Activated CD4-positive, alpha-beta T cell treated with anti-CD3 and anti-CD28 coated beads for 36 hours (primary cell): ENCODE measurements at regions of chr2 and their contacts with region 1.

Region 1: GRCh38 chr2:216698895-216699294 is 3.5 kb upstream of the IGFBP5 start:
- DNase-seq: no peak
- ATAC-seq: peak; percentile 71
- H3K4me3 Mint-ChIP-seq: no peak overlapping the region
- H3K27ac Mint-ChIP-seq: no peak overlapping the region
- H3K4me1 Mint-ChIP-seq: peaks cover 8% of the 10 kb centered on the region
- H3K27me3 Mint-ChIP-seq: peaks cover 39% of the 10 kb centered on the region

Region 2: DNA sequence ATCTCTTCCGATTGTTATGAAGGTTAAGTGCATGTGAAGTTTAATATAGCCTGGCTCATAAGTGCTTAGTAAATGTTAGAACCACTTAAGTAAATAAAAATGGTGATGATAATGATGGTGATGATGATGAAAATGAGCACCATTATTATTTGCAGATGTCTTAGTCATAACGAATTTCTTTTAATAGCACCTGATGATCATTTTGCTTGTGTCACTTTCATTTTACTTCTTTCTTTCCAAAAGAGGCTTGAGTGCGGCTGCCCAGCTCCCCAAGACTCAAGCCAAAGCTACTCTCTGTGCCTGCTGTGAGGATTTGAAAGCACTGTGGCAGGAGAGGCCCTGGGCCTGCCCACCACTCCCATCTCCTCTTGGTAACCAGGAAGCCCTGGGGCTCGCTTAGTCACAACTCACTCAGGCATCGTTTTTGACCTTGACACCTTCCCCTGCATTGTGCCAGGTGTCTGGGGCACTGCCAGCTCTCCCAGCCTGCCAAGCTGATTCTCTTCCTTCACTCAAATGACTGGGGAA is 159.1 kb before region 1 on chr2:
- CTCF ChIA-PET with region 1: no interaction called
- POLR2A ChIA-PET with region 1: no interaction called
- intact Hi-C with region 1: no loop called
- DNase-seq: no peak
- ATAC-seq: no peak
- H3K4me3 Mint-ChIP-seq: no peak overlapping the region
- H3K27ac Mint-ChIP-seq: no peak overlapping the region
- H3K4me1 Mint-ChIP-seq: peaks cover 4% of the 10 kb centered on the region
- H3K27me3 Mint-ChIP-seq: no peaks in the 10 kb centered on the region

Region 3: DNA sequence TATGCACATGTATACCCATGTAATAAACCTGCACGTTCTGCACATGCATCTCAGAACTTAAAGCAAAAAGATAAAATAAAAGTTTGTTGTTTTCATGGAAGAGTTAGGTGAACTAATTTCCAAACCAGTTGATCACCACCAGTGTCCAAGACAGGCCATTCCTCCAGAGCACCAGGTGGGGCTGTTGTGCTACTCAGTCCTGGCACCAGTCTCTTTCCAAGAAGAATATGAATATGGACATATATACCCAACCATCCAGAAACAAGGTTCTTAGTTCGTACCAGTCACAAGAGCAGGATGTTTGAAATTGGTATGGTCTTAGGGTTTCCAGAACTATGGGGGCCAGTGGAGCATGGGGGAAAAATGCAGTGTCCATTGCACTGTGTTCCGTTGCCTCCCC is 178.2 kb after region 1 on chr2:
- CTCF ChIA-PET with region 1: no interaction called
- POLR2A ChIA-PET with region 1: no interaction called
- intact Hi-C with region 1: loop called in 1 of 2 experiments (anchors 10 kb)
- DNase-seq: peak; percentile 14
- ATAC-seq: no peak
- H3K4me3 Mint-ChIP-seq: no peak overlapping the region
- H3K27ac Mint-ChIP-seq: no peak overlapping the region
- H3K4me1 Mint-ChIP-seq: peaks cover 11% of the 10 kb centered on the region
- H3K27me3 Mint-ChIP-seq: no peaks in the 10 kb centered on the region

Region 4: GRCh38 chr2:217142649-217143266 is 443.9 kb after region 1 on chr2:
- CTCF ChIA-PET with region 1: no interaction called
- POLR2A ChIA-PET with region 1: no interaction called
- intact Hi-C with region 1: loop called in 1 of 2 experiments (anchors 5 kb)
- DNase-seq: peak; percentile 57
- ATAC-seq: no peak
- H3K4me3 Mint-ChIP-seq: no peak overlapping the region
- H3K27ac Mint-ChIP-seq: no peak overlapping the region
- H3K4me1 Mint-ChIP-seq: no peaks in the 10 kb centered on the region
- H3K27me3 Mint-ChIP-seq: peaks cover 12% of the 10 kb centered on the region

Region 5: GRCh38 chr2:217166241-217166850 is 467.5 kb after region 1 on chr2:
- CTCF ChIA-PET with region 1: interaction called, 3 read pairs
- POLR2A ChIA-PET with region 1: no interaction called
- intact Hi-C with region 1: loop called in 1 of 2 experiments (anchors 2 kb)
- DNase-seq: no peak
- ATAC-seq: no peak
- H3K4me3 Mint-ChIP-seq: no peak overlapping the region
- H3K27ac Mint-ChIP-seq: no peak overlapping the region
- H3K4me1 Mint-ChIP-seq: peaks cover 17% of the 10 kb centered on the region
- H3K27me3 Mint-ChIP-seq: peaks cover 14% of the 10 kb centered on the region

Region 6: DNA sequence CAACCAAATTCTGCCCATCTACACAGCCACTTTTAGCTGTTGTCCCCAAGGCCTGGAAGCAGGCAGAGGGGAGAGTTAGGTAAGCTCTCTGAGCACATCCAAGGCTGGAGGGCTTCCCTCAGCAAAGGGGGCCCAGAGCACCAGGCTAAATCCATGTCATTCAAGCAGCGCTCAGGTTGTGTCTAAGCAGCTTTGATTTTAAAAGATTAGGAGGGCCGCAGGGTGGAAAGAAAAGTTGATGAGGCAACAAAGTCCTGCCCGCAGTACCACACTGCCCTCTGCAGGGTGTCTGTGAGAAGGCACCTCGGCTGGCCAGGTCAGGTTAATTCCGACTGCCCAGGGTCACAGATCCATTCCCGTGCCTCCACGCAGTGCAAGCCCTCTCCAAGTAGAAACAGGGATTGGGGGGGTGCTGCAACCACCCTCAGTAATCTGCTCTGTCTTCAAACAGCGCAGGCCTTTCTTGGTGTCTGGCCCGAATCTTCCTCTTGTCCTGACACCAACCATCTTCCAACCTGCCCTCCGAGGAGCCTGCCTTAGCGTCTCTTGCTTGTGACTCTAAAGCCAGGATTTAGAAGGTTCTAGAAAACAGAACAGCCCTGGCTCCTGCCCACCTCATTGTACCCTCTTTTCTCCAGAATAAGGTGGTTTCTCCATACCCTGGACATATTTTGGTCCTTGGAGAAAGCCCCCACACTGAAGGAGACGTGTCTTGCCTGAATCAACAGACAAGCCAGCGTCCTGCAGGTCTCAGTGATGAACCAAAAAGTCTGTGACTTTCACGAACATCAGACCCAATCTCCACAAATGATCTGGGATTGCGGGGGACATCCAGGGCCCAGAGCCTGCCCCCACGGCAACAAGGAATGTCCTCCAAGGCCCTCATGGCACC is 1014.7 kb after region 1 on chr2:
- CTCF ChIA-PET with region 1: interaction called, 3 read pairs
- POLR2A ChIA-PET with region 1: no interaction called
- intact Hi-C with region 1: loop called (anchors 2 to 5 kb)
- DNase-seq: peak; percentile 86
- ATAC-seq: peak; percentile 78
- H3K4me3 Mint-ChIP-seq: no peak overlapping the region
- H3K27ac Mint-ChIP-seq: no peak overlapping the region
- H3K4me1 Mint-ChIP-seq: no peaks in the 10 kb centered on the region
- H3K27me3 Mint-ChIP-seq: peaks cover 2% of the 10 kb centered on the region